Heart left ventricle (tissue), 16 donors: ENCODE measurements at regions of chr3 and their contacts with region 1.

Region 1: GRCh38 chr3:3499012-3499562 is 300.1 kb upstream of the LRRN1 start:
- DNase-seq: no peak
- ATAC-seq: no peak
- H3K4me3 ChIP-seq: no peak overlapping the region
- H3K27ac ChIP-seq: no peak overlapping the region
- H3K4me1 ChIP-seq: no peaks in the 10 kb centered on the region
- H3K27me3 ChIP-seq: no peaks in the 10 kb centered on the region
- CTCF ChIP-seq: no peak
- POLR2A ChIP-seq: no peak

Region 2: GRCh38 chr3:3447641-3448040 is 51.4 kb before region 1 on chr3:
- intact Hi-C with region 1: no loop called
- DNase-seq: no peak
- ATAC-seq: no peak
- H3K4me3 ChIP-seq: no peak overlapping the region
- H3K27ac ChIP-seq: no peak overlapping the region
- H3K4me1 ChIP-seq: no peaks in the 10 kb centered on the region
- H3K27me3 ChIP-seq: no peaks in the 10 kb centered on the region
- CTCF ChIP-seq: no peak
- POLR2A ChIP-seq: no peak

Region 3: DNA sequence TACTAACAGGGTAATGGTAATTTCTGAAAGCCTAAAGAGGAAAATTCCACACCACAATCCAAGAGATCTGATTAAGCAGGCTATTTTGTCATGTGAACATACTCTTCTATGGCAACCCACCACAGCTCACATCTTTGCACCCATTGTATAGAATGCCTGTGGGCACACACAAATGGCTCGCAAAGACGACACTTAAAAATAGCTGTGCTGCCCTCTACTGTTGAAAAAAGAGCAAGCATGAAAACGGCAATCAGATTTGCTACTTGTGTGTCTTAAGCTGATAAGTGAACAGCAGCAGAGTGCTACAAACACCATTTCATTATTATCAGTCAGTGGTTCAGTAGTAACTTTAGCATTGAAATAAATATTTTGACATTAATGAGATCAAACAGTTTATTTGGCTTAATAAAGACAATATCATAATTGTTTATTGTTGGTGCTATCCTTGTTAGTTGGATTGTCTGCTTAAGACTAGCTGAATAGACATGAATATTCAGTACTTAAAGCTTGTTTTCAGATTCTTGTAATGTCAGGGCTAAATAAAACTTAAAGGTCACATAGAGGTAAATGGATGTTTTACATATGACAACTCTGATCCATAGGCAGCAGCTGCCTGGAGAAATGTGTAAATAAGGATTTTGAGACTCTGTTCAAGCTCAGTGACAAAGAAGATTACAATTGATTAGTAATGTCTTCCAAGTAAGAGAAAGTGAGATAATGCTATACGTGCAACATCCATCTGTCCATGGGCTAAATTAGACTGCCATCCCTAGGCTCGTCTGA is 499.2 kb after region 1 on chr3:
- intact Hi-C with region 1: loop called in 1 of 10 experiments (anchors 10 kb)
- DNase-seq: no peak
- ATAC-seq: no peak
- H3K4me3 ChIP-seq: no peak overlapping the region
- H3K27ac ChIP-seq: no peak overlapping the region
- H3K4me1 ChIP-seq: no peaks in the 10 kb centered on the region
- H3K27me3 ChIP-seq: no peaks in the 10 kb centered on the region
- CTCF ChIP-seq: peak; percentile 18 to 50 (median 42)
- POLR2A ChIP-seq: no peak